CD4-positive, alpha-beta memory T cell (primary cell): ENCODE measurements at regions of chr1 and their contacts with region 1.

Region 1: DNA sequence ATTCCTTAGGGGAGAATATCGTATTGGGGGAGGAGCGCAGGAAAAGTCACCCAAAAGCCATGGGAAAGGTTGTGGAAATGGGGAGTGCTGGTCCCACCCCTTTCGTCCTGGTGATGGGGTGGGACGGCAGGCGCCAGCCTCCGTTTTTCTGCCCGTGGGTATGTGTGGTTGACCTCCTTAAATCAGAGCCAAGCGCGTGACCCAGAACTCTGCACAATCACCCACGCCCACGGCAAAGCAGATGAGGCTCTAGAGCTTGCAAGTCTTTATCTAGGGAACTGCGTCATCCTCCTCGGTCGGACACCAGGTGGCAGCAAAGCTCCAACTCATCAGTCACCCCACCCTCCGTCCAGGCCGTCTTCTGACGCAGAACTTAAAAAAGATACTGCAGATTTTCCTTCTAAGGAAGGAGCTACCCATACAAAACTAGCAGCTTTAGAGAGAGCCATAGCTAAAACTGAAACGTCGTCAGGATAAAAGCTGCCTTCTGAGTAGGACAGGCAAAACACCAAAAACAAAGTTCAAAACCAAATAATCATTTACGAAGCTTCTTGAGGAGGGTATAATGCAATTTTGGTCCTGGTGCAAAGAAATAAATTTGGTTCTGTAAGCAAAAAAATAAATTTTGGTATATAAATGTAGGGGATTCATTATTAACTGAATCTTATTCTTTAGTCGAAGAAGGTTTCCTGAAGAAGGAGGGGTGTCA is 62.0 kb downstream of the TBX19 start:
- DNase-seq: peak; percentile 86 to 91 (median 89)
- H3K4me3 ChIP-seq: no peak overlapping the region
- H3K4me3 Mint-ChIP-seq: peak overlapping the region; percentile 55 to 82 (median 64)
- H3K27ac ChIP-seq: peak overlapping the region; percentile 17
- H3K27ac Mint-ChIP-seq: peak overlapping the region; percentile 91 to 97 (median 93)
- H3K4me1 ChIP-seq: peaks cover 34% of the 10 kb centered on the region
- H3K4me1 Mint-ChIP-seq: peaks cover 34 to 74% (median 49%) of the 10 kb centered on the region in 4 donors
- H3K27me3 ChIP-seq: no peaks in the 10 kb centered on the region
- H3K27me3 Mint-ChIP-seq: no peaks in the 10 kb centered on the region

Region 2: GRCh38 chr1:168179438-168180147 is 163.1 kb before region 1 on chr1:
- CTCF ChIA-PET with region 1: no interaction called
- POLR2A ChIA-PET with region 1: no interaction called
- intact Hi-C with region 1: no loop called
- DNase-seq: no peak
- H3K4me3 ChIP-seq: peak overlapping the region; percentile 86 to 99
- H3K4me3 Mint-ChIP-seq: no peak overlapping the region
- H3K27ac ChIP-seq: peak overlapping the region; percentile 95
- H3K27ac Mint-ChIP-seq: no peak overlapping the region
- H3K4me1 ChIP-seq: peaks cover 24% of the 10 kb centered on the region
- H3K4me1 Mint-ChIP-seq: peaks cover 5 to 21% (median 11%) of the 10 kb centered on the region in 4 donors
- H3K27me3 ChIP-seq: no peaks in the 10 kb centered on the region
- H3K27me3 Mint-ChIP-seq: no peaks in the 10 kb centered on the region

Region 3: GRCh38 chr1:168293356-168293755 is 49.4 kb before region 1 on chr1:
- CTCF ChIA-PET with region 1: no interaction called
- POLR2A ChIA-PET with region 1: no interaction called
- intact Hi-C with region 1: no loop called
- DNase-seq: no peak
- H3K4me3 ChIP-seq: no peak overlapping the region
- H3K4me3 Mint-ChIP-seq: no peak overlapping the region
- H3K27ac ChIP-seq: no peak overlapping the region
- H3K27ac Mint-ChIP-seq: peak overlapping the region in 1 of 7 donors; percentile 74
- H3K4me1 ChIP-seq: no peaks in the 10 kb centered on the region
- H3K4me1 Mint-ChIP-seq: no peaks in the 10 kb centered on the region
- H3K27me3 ChIP-seq: no peaks in the 10 kb centered on the region
- H3K27me3 Mint-ChIP-seq: no peaks in the 10 kb centered on the region

Region 4: GRCh38 chr1:168360151-168361021 is 17.7 kb after region 1 on chr1:
- CTCF ChIA-PET with region 1: interaction called, 543 read pairs
- POLR2A ChIA-PET with region 1: interaction called, 162 read pairs
- intact Hi-C with region 1: loop called (anchors 1 kb)
- DNase-seq: peak in 1 of 5 donors; percentile 55
- H3K4me3 ChIP-seq: no peak overlapping the region
- H3K4me3 Mint-ChIP-seq: peak overlapping the region in 3 of 8 donors; percentile 25 to 48 (median 36)
- H3K27ac ChIP-seq: no peak overlapping the region
- H3K27ac Mint-ChIP-seq: peak overlapping the region in 5 of 7 donors; percentile 79 to 100 (median 90)
- H3K4me1 ChIP-seq: peaks cover 49% of the 10 kb centered on the region
- H3K4me1 Mint-ChIP-seq: peaks cover 27 to 55% (median 44%) of the 10 kb centered on the region in 4 donors
- H3K27me3 ChIP-seq: no peaks in the 10 kb centered on the region
- H3K27me3 Mint-ChIP-seq: no peaks in the 10 kb centered on the region

Region 5: GRCh38 chr1:168408536-168409242 is 66.0 kb after region 1 on chr1:
- CTCF ChIA-PET with region 1: interaction called, 19 read pairs
- POLR2A ChIA-PET with region 1: interaction called, 3 read pairs
- intact Hi-C with region 1: no loop called
- DNase-seq: peak; percentile 40 to 86 (median 49)
- H3K4me3 ChIP-seq: no peak overlapping the region
- H3K4me3 Mint-ChIP-seq: peak overlapping the region; percentile 40 to 85 (median 70)
- H3K27ac ChIP-seq: peak overlapping the region; percentile 17
- H3K27ac Mint-ChIP-seq: peak overlapping the region; percentile 85 to 95 (median 89)
- H3K4me1 ChIP-seq: peaks cover 41% of the 10 kb centered on the region
- H3K4me1 Mint-ChIP-seq: peaks cover 35 to 58% (median 44%) of the 10 kb centered on the region in 4 donors
- H3K27me3 ChIP-seq: no peaks in the 10 kb centered on the region
- H3K27me3 Mint-ChIP-seq: no peaks in the 10 kb centered on the region

Region 6: GRCh38 chr1:168466092-168466713 is 123.5 kb after region 1 on chr1:
- CTCF ChIA-PET with region 1: interaction called, 21 read pairs
- POLR2A ChIA-PET with region 1: no interaction called
- intact Hi-C with region 1: no loop called
- DNase-seq: peak in 2 of 5 donors; percentile 16 to 41
- H3K4me3 ChIP-seq: peak overlapping the region in 1 of 2 donors; percentile 9
- H3K4me3 Mint-ChIP-seq: peak overlapping the region in 6 of 8 donors; percentile 47 to 88 (median 66)
- H3K27ac ChIP-seq: no peak overlapping the region
- H3K27ac Mint-ChIP-seq: peak overlapping the region; percentile 83 to 88 (median 85)
- H3K4me1 ChIP-seq: peaks cover 57% of the 10 kb centered on the region
- H3K4me1 Mint-ChIP-seq: peaks cover 54 to 67% (median 60%) of the 10 kb centered on the region in 4 donors
- H3K27me3 ChIP-seq: no peaks in the 10 kb centered on the region
- H3K27me3 Mint-ChIP-seq: no peaks in the 10 kb centered on the region

Region 7: DNA sequence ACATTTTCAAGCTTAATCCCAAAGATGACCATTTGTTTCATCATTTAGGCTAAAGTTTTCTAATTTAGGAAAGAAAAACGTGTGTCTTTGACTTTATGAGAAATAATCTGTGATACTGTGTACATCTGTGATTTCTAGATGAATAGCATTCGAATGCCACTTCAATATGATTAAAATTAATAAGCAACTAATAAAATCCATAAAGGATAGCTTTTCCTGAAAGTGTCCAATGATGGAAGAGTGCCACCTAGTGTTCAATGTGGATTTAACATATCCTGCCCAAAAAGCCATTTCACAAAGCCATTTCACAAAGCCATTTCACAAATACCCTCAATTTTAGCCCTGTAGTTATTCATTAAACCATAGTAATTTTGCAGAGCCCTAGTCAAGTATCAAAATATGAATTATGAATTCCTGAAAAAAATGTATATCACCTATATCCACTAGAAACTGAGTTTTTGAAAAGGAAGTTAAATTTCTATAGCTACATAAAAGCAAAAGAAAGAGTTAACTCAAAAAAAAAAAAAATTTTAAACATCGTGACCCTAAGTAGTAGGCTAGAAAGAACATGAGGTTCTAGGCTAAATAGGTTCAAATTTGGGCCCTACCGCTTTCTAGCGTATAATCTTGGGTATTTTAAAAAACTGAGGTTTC is 1005.8 kb after region 1 on chr1:
- CTCF ChIA-PET with region 1: interaction called, 156 read pairs
- POLR2A ChIA-PET with region 1: interaction called, 17 read pairs
- intact Hi-C with region 1: no loop called
- DNase-seq: peak in 4 of 5 donors; percentile 44 to 52 (median 47)
- H3K4me3 ChIP-seq: no peak overlapping the region
- H3K4me3 Mint-ChIP-seq: no peak overlapping the region
- H3K27ac ChIP-seq: no peak overlapping the region
- H3K27ac Mint-ChIP-seq: no peak overlapping the region
- H3K4me1 ChIP-seq: no peaks in the 10 kb centered on the region
- H3K4me1 Mint-ChIP-seq: peaks cover 0 to 3% (median under 1%) of the 10 kb centered on the region in 4 donors
- H3K27me3 ChIP-seq: no peaks in the 10 kb centered on the region
- H3K27me3 Mint-ChIP-seq: peaks cover 0 to 1% of the 10 kb centered on the region in 2 donors

Region 8: GRCh38 chr1:169893494-169894362 is 1551.0 kb after region 1 on chr1 and contains the start of gene SCYL3:
- CTCF ChIA-PET with region 1: no interaction called
- POLR2A ChIA-PET with region 1: interaction called, 6 read pairs
- intact Hi-C with region 1: loop called (anchors 10 kb)
- DNase-seq: peak; percentile 96 to 97 (median 96)
- H3K4me3 ChIP-seq: peak within 1 kb of the TSS; percentile 58 to 86
- H3K4me3 Mint-ChIP-seq: peak within 1 kb of the TSS; percentile 92 to 97 (median 94)
- H3K27ac ChIP-seq: peak within 1 kb of the TSS; percentile 98
- H3K27ac Mint-ChIP-seq: peak within 1 kb of the TSS; percentile 97 to 100 (median 100)
- H3K4me1 ChIP-seq: peaks cover 46% of the 10 kb centered on the region
- H3K4me1 Mint-ChIP-seq: peaks cover 35 to 51% (median 43%) of the 10 kb centered on the region in 4 donors
- H3K27me3 ChIP-seq: no peaks in the 10 kb centered on the region
- H3K27me3 Mint-ChIP-seq: peaks cover 0 to 2% of the 10 kb centered on the region in 2 donors
- total RNA-seq, gene SCYL3: 23.5 to 24.3 TPM